A549 (cell line): ENCODE measurements at regions of chr12 and their contacts with region 1.

Region 1: GRCh38 chr12:7142056-7142644 is 12.0 kb downstream of the CLSTN3 start:
- DNase-seq: peak; percentile 59 to 87
- ATAC-seq: peak; percentile 88 to 94
- H3K4me3 ChIP-seq: no peak overlapping the region
- H3K27ac ChIP-seq: no peak overlapping the region
- H3K4me1 ChIP-seq: no peaks in the 10 kb centered on the region
- CTCF ChIP-seq: peak; percentile 64
- EP300 ChIP-seq: no peak
- POLR2A ChIP-seq: no peak
- RAD21 ChIP-seq: peak in 1 of 2 experiments; percentile 56; a peak in 3 of 5 replicates

Region 2: GRCh38 chr12:7060353-7060954 is 81.7 kb before region 1 on chr12 and contains the start of gene C1S:
- CTCF ChIA-PET with region 1: interaction called, 15 read pairs
- POLR2A ChIA-PET with region 1: no interaction called
- DNase-seq: peak; percentile 93 to 95
- ATAC-seq: peak; percentile 99
- H3K4me3 ChIP-seq: peak within 1 kb of the TSS; percentile 15; the same call in 1 of the 3 replicates
- H3K27ac ChIP-seq: peak within 1 kb of the TSS; percentile 77 to 93
- H3K4me1 ChIP-seq: peaks cover 22% of the 10 kb centered on the region
- CTCF ChIP-seq: peak; percentile 96
- EP300 ChIP-seq: no peak
- POLR2A ChIP-seq: peak; percentile 30; the same call in 1 of the 2 replicates
- RAD21 ChIP-seq: peak; percentile 98 to 99
- polyA plus RNA-seq, gene C1S: 107 and 109 TPM in 2 replicates

Region 3: GRCh38 chr12:7122811-7123769 is 19.1 kb before region 1 on chr12:
- CTCF ChIA-PET with region 1: interaction called, 11 read pairs
- POLR2A ChIA-PET with region 1: no interaction called
- DNase-seq: no peak
- ATAC-seq: no peak
- H3K4me3 ChIP-seq: no peak overlapping the region
- H3K27ac ChIP-seq: no peak overlapping the region
- H3K4me1 ChIP-seq: no peaks in the 10 kb centered on the region
- CTCF ChIP-seq: no peak
- EP300 ChIP-seq: no peak
- POLR2A ChIP-seq: no peak
- RAD21 ChIP-seq: no peak

Region 4: DNA sequence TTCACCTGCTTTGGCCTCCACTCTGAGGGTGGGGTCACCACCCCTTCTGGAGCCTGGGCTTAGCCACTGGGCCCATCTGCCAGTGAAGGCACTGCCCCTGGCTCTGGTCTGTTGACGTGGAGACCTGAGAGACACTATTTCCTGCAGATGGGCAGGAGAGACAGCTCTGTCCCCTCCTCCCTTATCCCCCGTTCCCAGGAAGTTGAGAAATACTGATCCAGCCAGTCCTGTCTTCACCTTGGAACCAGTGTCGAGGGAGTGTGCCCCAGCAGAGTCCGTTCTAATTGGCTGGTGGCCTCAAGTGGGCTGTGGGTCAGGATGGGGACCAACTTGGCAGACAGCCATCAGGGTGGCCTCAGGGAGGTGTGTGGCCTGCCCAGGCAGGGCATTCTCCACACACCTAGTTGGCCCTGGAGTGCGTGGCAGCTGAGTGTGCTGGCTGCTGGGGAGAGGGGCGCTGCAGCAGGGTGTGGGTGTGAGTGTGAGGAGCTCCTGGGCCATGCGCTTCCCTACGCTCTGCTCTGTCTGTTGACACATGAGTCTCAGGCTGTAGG is 13.4 kb after region 1 on chr12:
- CTCF ChIA-PET with region 1: interaction called, 75 read pairs
- POLR2A ChIA-PET with region 1: no interaction called
- DNase-seq: no peak
- ATAC-seq: no peak
- H3K4me3 ChIP-seq: no peak overlapping the region
- H3K27ac ChIP-seq: no peak overlapping the region
- H3K4me1 ChIP-seq: no peaks in the 10 kb centered on the region
- CTCF ChIP-seq: no peak
- EP300 ChIP-seq: no peak
- POLR2A ChIP-seq: no peak
- RAD21 ChIP-seq: no peak

Region 5: DNA sequence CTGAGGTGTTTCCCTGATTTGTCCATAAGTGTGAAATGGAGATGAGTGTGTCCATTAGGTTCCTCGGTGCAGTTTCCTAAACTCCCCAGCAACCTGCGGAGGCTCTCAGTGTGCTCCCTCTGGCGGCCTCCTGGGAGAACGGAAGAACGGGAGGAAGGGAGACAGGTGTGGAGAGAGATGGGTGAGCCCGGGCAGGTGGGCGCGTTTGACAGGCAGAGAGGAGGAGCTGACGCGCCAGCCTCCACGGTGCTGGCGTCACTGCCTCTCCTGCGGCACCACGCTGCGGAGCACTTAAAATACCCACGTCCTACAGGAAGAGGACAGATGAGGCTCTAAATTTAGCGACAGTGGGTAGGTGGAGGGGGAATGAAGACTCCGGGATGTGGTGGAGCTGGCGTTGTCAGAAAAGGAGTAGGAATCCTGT is 20.6 kb after region 1 on chr12:
- CTCF ChIA-PET with region 1: interaction called, 75 read pairs
- POLR2A ChIA-PET with region 1: no interaction called
- DNase-seq: peak; percentile 56 to 66
- ATAC-seq: peak; percentile 84 to 90
- H3K4me3 ChIP-seq: no peak overlapping the region
- H3K27ac ChIP-seq: no peak overlapping the region
- H3K4me1 ChIP-seq: 0 out of 3 replicates have a peak, but pooled peaks cover 4% of the 10 kb centered on the region
- CTCF ChIP-seq: peak; percentile 45
- EP300 ChIP-seq: no peak
- POLR2A ChIP-seq: no peak
- RAD21 ChIP-seq: peak in 1 of 2 experiments; percentile 42; a peak in 3 of 5 replicates

Region 6: GRCh38 chr12:7188562-7189397 is 46.6 kb after region 1 on chr12:
- CTCF ChIA-PET with region 1: interaction called, 15 read pairs
- POLR2A ChIA-PET with region 1: no interaction called
- DNase-seq: peak; percentile 79 to 86
- ATAC-seq: peak; percentile 78 to 88
- H3K4me3 ChIP-seq: peak overlapping the region; percentile 92
- H3K27ac ChIP-seq: peak overlapping the region; percentile 73 to 94
- H3K4me1 ChIP-seq: peaks cover 19% of the 10 kb centered on the region; the same call in 2 of the 3 replicates
- CTCF ChIP-seq: peak; percentile 58
- EP300 ChIP-seq: no peak
- POLR2A ChIP-seq: no peak
- RAD21 ChIP-seq: peak; percentile 64 to 81

Region 7: GRCh38 chr12:7217475-7218069 is 75.4 kb after region 1 on chr12:
- CTCF ChIA-PET with region 1: no interaction called
- POLR2A ChIA-PET with region 1: no interaction called
- DNase-seq: no peak
- ATAC-seq: peak; percentile 60 to 63; a peak in 5 of 6 replicates
- H3K4me3 ChIP-seq: no peak overlapping the region
- H3K27ac ChIP-seq: no peak overlapping the region
- H3K4me1 ChIP-seq: no peaks in the 10 kb centered on the region
- CTCF ChIP-seq: no peak
- EP300 ChIP-seq: no peak
- POLR2A ChIP-seq: no peak
- RAD21 ChIP-seq: no peak

Region 8: DNA sequence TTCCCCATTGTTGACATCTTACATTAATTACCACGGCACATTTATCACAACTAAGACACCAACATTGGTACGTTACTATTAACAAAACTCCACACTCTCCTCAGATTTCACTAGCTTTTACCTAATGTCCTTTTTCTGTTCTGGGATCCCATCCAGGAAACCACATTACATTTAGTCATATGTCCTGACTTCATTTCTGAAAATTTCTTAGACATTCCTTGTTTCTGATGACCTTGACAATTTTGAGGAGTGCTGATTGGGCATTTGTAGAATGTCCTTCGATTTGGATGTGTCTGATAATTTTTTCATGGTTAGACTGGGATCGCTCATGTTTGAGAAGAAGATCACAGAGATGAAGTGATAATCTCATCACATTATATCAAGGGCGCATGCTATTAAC is 127.1 kb after region 1 on chr12:
- CTCF ChIA-PET with region 1: no interaction called
- POLR2A ChIA-PET with region 1: no interaction called
- DNase-seq: no peak
- ATAC-seq: no peak
- H3K4me3 ChIP-seq: no peak overlapping the region
- H3K27ac ChIP-seq: no peak overlapping the region
- H3K4me1 ChIP-seq: no peaks in the 10 kb centered on the region
- CTCF ChIP-seq: no peak
- EP300 ChIP-seq: no peak
- POLR2A ChIP-seq: no peak
- RAD21 ChIP-seq: no peak

Region 9: DNA sequence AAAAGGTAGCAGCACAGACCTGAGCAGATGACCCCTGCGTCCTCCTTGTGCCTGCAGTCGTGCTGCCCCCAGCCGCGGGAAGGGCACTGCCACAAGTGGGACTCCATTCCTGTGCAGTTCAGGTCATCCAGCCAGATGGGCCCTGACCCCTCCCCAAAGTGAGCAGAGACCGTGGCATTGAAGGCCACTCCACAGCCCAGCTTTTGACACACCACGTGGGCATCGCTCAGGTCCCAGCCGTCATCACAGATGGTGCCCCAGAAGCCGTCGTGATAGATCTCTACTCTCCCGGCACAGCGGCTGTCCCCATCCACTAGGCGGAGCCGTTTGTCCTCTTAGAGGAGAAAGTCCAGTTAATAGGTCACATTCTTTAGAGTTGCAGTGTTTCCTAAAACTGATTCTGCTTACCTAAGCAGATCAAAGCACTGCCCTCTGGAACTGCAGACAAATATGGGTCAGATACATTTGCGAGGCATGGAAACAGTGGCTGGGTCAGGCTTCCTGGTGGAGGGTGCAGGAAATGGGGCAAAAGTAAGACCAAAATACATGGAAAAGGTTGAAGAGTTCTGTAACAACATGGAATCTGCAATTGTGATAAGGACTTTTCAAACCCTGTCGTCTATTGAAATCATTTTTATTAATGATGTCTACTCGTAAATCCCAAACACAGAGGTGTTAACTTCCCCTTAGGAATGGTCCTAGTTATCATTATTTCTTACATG is 232.4 kb after region 1 on chr12:
- CTCF ChIA-PET with region 1: no interaction called
- POLR2A ChIA-PET with region 1: no interaction called
- DNase-seq: peak; percentile 56 to 60
- ATAC-seq: peak; percentile 88 to 95
- H3K4me3 ChIP-seq: no peak overlapping the region
- H3K27ac ChIP-seq: no peak overlapping the region
- H3K4me1 ChIP-seq: no peaks in the 10 kb centered on the region
- CTCF ChIP-seq: peak; percentile 60
- EP300 ChIP-seq: no peak
- POLR2A ChIP-seq: no peak
- RAD21 ChIP-seq: peak; percentile 70 to 87